Panc1 (cell line): ENCODE measurements at regions of chr12 and their contacts with region 1.

Region 1: GRCh38 chr12:31682136-31682962 is 22.9 kb downstream of the ETFBKMT start:
- DNase-seq: peak; percentile 83
- ATAC-seq: peak; percentile 99
- H3K4me3 ChIP-seq: no peak overlapping the region
- H3K27ac ChIP-seq: no peak overlapping the region
- H3K4me1 ChIP-seq: no peaks in the 10 kb centered on the region
- H3K27me3 ChIP-seq: no peaks in the 10 kb centered on the region
- CTCF ChIP-seq: peak; percentile 94

Region 2: GRCh38 chr12:31021809-31022494 is 660.4 kb before region 1 on chr12:
- CTCF ChIA-PET with region 1: no interaction called
- POLR2A ChIA-PET with region 1: no interaction called
- in situ Hi-C with region 1: no loop called
- intact Hi-C with region 1: no loop called
- DNase-seq: peak; percentile 18
- ATAC-seq: peak; percentile 75
- H3K4me3 ChIP-seq: no peak overlapping the region
- H3K27ac ChIP-seq: no peak overlapping the region
- H3K4me1 ChIP-seq: peaks cover 18% of the 10 kb centered on the region
- H3K27me3 ChIP-seq: no peaks in the 10 kb centered on the region
- CTCF ChIP-seq: no peak

Region 3: DNA sequence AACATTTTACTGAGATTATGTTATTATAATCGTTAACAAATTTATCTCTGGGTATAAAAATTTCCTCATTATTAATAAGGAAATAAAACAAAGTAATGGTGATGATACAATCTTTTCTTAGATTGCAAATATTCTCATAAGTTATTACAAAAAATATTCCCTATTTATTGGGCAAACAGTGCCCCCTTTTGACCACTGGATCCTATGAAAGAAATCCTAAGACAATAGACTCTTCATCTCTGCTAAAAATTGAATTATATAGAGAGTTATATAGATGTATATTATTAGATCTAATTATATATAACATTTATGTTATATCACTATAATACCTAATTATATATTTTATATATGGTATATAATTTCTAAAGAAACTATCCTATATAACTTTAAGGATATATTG is 622.8 kb after region 1 on chr12:
- CTCF ChIA-PET with region 1: no interaction called
- POLR2A ChIA-PET with region 1: no interaction called
- in situ Hi-C with region 1: no loop called
- intact Hi-C with region 1: loop called (anchors 5 kb)
- DNase-seq: no peak
- ATAC-seq: no peak
- H3K4me3 ChIP-seq: no peak overlapping the region
- H3K27ac ChIP-seq: no peak overlapping the region
- H3K4me1 ChIP-seq: peaks cover 3% of the 10 kb centered on the region; the same call in 1 of the 2 replicates
- H3K27me3 ChIP-seq: no peaks in the 10 kb centered on the region
- CTCF ChIP-seq: peak; percentile 20; the same call in 1 of the 2 replicates